MCF 10A (cell line): ENCODE measurements at regions of chr4 and their contacts with region 1.

Region 1: DNA sequence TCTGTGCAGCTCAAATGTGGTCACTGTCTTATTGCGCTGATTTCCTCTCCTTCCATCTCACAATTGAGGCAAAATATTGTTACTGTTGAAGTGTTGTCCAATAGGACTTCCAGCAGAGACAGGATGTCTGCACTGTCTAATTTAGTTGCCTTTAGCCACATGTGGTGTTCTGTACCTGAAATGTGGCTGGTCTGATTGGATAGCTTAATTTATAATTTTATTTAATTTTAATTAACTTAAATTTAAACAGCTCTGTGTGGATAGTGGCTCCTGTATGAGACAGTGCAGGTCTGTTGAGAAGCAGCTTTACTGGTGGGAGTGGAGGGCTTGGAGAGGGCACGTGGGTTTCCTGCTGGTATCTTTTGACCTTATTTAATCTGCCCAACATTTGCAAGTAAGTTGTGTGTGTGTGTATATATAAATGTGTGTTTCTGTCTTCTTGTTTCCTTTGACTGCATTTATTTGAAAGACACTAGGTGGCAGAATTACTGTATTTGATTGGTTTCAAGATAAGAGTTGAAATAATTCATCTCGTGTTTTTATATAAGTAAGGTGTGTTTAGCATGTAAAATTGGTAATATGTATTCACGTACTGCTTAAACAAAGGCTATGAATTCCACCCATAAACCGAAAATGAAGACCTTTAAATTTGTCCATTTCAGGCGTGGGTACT is 55.3 kb upstream of the MSANTD1 start:
- DNase-seq: peak; percentile 6
- H3K4me3 Mint-ChIP-seq: no peak overlapping the region
- H3K27ac Mint-ChIP-seq: no peak overlapping the region
- H3K4me1 Mint-ChIP-seq: peaks cover 9% of the 10 kb centered on the region
- H3K27me3 Mint-ChIP-seq: no peaks in the 10 kb centered on the region
- CTCF ChIP-seq: peak; percentile 34

Region 2: DNA sequence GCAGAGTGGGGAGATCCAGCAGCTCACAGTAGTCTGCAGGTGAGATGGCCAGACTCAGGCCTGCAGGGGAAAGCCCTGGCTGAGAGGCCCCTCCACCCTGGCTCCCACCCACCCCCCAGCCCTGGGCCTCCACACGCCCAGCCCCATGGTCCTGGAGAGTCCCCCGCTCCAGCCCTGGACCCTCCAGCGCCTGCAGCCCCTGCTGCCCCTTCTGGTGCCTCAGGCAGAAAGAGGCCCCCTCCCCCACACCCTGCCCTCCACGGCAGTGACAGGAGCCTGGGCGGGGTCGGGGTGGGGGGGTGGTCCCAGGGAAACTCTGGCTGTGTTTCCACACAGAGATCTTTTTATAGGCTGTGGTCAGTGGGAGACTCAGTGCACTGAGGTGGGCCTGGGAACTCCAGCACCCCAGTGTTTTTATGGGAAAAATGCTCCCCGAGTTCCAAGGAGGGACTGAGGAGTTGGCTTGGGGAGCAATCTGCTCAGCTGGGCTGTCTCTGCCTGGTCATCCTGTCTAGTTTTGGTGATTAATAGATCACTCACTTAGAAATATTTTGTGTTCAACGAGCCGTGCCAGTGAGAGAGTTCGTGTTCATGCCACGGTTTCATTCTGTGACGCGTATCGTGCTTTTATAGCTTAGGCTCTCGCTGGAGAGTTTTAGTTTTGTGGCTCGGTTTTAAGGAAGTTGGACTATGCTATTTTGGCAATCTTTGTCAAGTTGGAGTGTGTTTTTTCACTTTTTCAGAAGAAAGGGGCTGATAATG is 195.0 kb after region 1 on chr4:
- CTCF ChIA-PET with region 1: no interaction called
- POLR2A ChIA-PET with region 1: no interaction called
- intact Hi-C with region 1: no loop called
- DNase-seq: peak; percentile 49
- H3K4me3 Mint-ChIP-seq: peak overlapping the region; percentile 81
- H3K27ac Mint-ChIP-seq: peak overlapping the region; percentile 81
- H3K4me1 Mint-ChIP-seq: peaks cover 52% of the 10 kb centered on the region
- H3K27me3 Mint-ChIP-seq: no peaks in the 10 kb centered on the region
- CTCF ChIP-seq: no peak

Region 3: DNA sequence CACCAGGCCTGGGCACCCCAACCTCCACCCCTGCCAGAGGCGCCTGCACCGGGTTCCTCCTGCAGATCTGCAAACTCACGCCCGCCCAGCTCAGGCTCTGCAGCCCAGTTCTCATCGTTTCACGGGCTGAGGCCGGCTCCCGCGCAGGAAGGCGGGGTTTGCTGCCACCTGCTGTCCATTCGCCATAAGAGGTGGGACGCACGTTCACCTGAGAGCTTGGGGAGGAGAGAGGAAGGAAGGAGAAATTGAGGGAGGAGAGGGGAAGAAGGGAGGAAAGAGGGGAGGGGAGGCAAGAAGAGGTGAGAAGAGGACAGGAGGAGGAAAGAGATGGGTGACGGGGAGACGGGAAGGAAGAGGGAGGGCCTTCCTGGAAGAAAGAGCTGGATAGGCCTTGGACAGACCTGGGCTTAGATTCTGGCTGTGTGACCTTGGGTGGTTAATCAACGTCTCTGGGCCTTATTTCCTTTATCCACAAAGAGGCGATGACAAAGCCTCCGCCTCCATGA is 687.0 kb after region 1 on chr4:
- CTCF ChIA-PET with region 1: interaction called, 5 read pairs
- POLR2A ChIA-PET with region 1: no interaction called
- intact Hi-C with region 1: loop called (anchors 5 kb)
- DNase-seq: peak; percentile 71
- H3K4me3 Mint-ChIP-seq: no peak overlapping the region
- H3K27ac Mint-ChIP-seq: no peak overlapping the region
- H3K4me1 Mint-ChIP-seq: no peaks in the 10 kb centered on the region
- H3K27me3 Mint-ChIP-seq: peaks cover 85% of the 10 kb centered on the region
- CTCF ChIP-seq: peak; percentile 69